ENCODE measurements at regions of chr9 and their contacts with region 1.

Region 1: GRCh38 chr9:14478175-14479162 is 164.5 kb upstream of the NFIB start:
- DNase-seq: no peak
- ATAC-seq: no peak
- H3K4me3 ChIP-seq: no peak overlapping the region
- H3K27ac ChIP-seq: no peak overlapping the region
- H3K4me1 ChIP-seq: no peaks in the 10 kb centered on the region
- H3K27me3 ChIP-seq: no peaks in the 10 kb centered on the region
- CTCF ChIP-seq: no peak
- POLR2A ChIP-seq: no peak

Region 2: DNA sequence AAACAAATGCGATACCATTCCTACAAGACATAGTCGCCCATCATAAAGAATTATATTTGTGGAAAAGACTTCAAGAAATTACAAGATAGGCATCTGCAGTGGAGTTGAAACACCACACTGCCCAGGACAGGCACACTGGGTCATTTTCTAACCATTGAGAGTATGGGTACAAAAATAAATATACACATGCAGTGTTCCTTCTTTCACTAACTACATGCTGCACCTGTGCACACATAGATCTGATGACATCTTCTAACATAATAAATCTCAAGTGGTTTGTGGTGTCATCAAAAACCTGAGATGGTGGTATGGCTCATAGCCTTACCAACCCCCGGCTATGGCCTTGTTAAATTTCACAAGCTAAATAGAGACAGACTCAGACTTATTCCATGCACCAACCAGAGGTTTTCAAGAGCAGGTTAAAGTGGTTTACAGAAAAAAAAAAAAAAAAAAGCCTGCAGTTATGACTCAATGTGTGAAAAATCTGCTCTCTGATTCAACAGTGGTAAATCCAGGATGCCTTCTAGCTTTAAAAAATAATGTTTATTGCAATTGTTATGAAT is 152.1 kb before region 1 on chr9:
- intact Hi-C with region 1: no loop called
- DNase-seq: no peak
- ATAC-seq: no peak
- H3K4me3 ChIP-seq: no peak overlapping the region
- H3K27ac ChIP-seq: peak overlapping the region in 2 of 12 donors; percentile 3 to 14
- H3K4me1 ChIP-seq: peaks cover 0 to 44% (median 13%) of the 10 kb centered on the region in 12 donors
- H3K27me3 ChIP-seq: peaks cover 0 to 6% (median 0%) of the 10 kb centered on the region in 9 donors
- CTCF ChIP-seq: no peak
- POLR2A ChIP-seq: no peak

Region 3: GRCh38 chr9:14532716-14533115 is 54.2 kb after region 1 on chr9:
- intact Hi-C with region 1: loop called in 2 of 10 experiments (anchors 10 kb)
- DNase-seq: no peak
- ATAC-seq: no peak
- H3K4me3 ChIP-seq: no peak overlapping the region
- H3K27ac ChIP-seq: no peak overlapping the region
- H3K4me1 ChIP-seq: peaks cover 0 to 22% (median 8%) of the 10 kb centered on the region in 12 donors
- H3K27me3 ChIP-seq: no peaks in the 10 kb centered on the region
- CTCF ChIP-seq: no peak
- POLR2A ChIP-seq: no peak

Region 4: DNA sequence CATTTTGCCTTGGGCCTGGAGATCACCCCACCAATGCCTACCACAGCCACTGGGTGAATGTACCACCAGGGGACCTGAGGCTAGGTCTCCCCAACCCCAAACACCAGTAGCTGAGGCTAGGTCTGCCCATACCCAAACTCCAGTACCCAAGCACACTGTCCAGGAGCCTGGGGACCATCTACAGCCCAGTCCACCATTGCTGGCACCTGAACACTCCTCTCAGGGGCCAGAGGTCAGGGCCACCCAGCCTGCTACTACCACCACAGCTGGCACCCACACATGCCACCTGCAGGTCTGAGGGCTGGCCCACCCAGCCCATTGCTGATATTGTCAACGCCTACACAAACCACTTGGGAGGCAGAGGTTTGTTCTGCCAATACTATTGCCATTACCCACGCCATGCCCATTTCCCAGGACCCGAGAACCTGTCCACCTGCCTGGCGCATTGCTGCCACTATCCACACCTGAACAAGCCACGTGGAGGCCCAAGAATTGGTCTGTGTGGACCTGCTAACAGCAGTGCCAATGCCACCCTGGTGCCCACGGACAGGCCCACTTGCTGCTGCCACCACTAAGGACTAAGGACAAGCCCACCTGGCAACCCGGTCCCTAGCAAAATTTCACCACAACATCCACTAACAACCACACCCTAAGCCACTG is 155.6 kb after region 1 on chr9:
- intact Hi-C with region 1: loop called in 1 of 10 experiments (anchors 10 kb)
- DNase-seq: no peak
- ATAC-seq: no peak
- H3K4me3 ChIP-seq: no peak overlapping the region
- H3K27ac ChIP-seq: no peak overlapping the region
- H3K4me1 ChIP-seq: no peaks in the 10 kb centered on the region
- H3K27me3 ChIP-seq: no peaks in the 10 kb centered on the region
- CTCF ChIP-seq: no peak
- POLR2A ChIP-seq: no peak

Region 5: DNA sequence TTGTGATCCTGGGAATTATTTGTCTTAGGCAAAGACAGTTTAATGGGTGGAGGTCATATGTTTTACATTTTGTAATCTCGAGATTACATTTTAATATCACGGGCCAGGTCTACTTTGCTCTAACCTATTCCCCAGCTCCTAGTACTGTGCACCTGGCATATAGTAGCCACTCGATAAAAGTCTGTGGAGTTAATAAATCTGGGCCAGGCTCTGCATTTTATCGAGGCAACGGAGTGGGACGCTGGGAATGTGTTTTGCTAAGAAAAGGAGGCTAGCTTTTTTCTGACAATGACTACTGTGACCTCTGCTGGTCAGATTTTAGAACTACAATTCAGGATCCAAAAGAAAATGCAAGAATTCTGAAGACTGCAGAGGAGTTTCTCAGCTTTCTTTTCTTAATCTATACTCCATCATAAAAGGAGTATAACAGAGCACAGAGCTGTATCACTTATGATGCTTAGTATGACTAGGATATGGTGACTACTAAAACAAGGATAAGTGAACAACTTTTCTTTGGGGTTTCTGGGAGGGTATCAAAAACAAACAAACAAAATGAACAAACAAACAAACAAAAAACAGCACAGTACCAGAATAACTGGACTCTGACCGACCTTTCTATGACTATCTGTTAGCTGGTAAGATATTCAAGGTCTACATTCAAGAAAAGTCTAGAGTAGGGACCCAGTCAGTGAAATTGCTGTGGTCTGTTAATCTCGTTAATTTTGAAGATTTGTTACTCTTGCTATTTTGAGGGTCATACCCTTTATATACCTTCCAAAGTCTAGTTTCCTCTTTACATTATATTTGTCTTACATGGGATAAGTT is 290.1 kb after region 1 on chr9:
- intact Hi-C with region 1: loop called in 1 of 10 experiments (anchors 10 kb)
- DNase-seq: no peak
- ATAC-seq: peak in 3 of 4 donors; percentile 27 to 52 (median 42)
- H3K4me3 ChIP-seq: no peak overlapping the region
- H3K27ac ChIP-seq: no peak overlapping the region
- H3K4me1 ChIP-seq: peaks cover 0 to 4% (median 0%) of the 10 kb centered on the region in 12 donors
- H3K27me3 ChIP-seq: no peaks in the 10 kb centered on the region
- CTCF ChIP-seq: peak; percentile 64 to 83 (median 69)
- POLR2A ChIP-seq: no peak